ENCODE measurements at regions of chr4 and their contacts with region 1.

Region 1: DNA sequence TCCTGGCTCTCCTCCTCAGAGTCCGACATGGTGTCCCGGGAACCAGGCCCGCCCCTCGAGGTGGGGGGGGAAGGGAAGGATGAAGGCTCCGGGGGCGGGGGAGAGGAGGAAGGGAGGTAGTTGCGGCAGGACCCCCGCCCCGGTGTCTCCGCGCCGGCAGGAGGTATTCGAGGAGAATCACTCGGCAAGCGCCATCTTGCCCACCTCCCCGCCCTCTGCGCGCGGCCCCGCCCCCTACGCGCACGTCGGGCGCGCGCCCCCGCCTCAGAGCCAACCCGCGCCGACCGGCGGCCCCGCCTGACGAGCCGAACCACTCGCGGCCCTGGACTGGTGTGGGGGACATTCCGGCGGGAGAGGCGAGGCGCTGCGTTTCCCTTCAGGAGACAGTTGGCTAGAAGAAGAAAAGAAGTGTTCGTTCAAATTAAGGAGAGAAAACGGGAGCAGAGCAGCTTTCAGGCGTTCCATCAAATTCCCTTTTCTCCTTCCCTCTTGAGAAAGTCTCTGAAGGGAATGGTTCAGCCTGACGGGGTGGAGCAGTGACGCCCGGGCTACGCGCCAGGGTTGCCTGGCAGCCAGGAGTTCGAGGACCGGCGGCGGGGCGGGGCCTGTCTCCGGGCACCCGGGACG is at the start of gene RAB28:
- DNase-seq: peak; percentile 89 to 90 (median 89)
- H3K4me3 ChIP-seq: peak within 1 kb of the TSS; percentile 78 to 86 (median 82)
- H3K4me3 Mint-ChIP-seq: peak within 1 kb of the TSS; percentile 87 to 96
- H3K27ac ChIP-seq: peak within 1 kb of the TSS; percentile 74 to 90
- H3K27ac Mint-ChIP-seq: peak within 1 kb of the TSS; percentile 94 to 100 (median 99)
- H3K4me1 ChIP-seq: peaks cover 18 to 30% of the 10 kb centered on the region in 2 donors
- H3K4me1 Mint-ChIP-seq: peaks cover 25% of the 10 kb centered on the region
- H3K27me3 ChIP-seq: peaks cover 23 to 33% of the 10 kb centered on the region in 2 donors
- H3K27me3 Mint-ChIP-seq: peaks cover 20 to 23% (median 21%) of the 10 kb centered on the region in 3 donors
- CTCF ChIP-seq: no peak
- polyA plus RNA-seq, gene RAB28: 7.6 to 18.0 (median 17.8) TPM

Region 2: DNA sequence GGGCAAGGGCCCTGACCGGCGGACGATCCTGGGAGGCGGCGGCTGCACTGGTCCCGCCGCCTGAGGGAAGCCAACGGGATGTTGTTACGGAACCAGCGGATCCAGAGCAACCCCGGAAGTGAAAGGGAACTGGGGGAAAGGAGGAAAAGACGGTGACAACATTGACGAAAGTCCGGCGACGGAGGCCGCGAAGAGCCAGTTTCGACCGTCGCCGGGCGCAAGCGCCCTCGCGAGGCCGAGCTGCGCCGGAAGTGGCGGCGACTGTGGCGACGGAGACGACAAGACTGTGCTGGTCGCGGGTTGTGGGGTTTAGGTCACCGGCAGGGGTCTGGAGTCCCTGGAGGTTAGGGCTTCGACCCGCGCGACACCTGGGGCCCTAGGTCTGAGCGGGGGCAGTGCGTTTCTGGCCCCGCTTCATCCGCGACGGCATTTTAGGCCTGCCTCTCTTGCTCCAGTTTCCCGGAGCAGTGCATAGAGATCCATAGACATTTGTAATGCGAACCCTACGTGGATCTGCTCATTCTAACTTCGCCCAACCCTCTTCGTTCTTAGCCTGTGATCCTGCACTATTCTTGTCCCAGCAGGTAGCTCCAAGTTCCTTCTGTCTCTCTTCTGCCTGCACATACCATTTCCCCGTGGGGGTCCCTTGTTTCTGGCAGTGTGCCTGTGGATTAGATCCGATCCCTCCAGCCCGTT is 143.5 kb after region 1 on chr4 and contains the start of gene BOD1L1:
- intact Hi-C with region 1: loop called in 1 of 2 experiments (anchors 5 kb)
- DNase-seq: peak; percentile 90 to 91 (median 90)
- H3K4me3 ChIP-seq: peak within 1 kb of the TSS; percentile 83 to 92 (median 89)
- H3K4me3 Mint-ChIP-seq: peak within 1 kb of the TSS; percentile 86 to 95
- H3K27ac ChIP-seq: peak within 1 kb of the TSS; percentile 72 to 91
- H3K27ac Mint-ChIP-seq: peak within 1 kb of the TSS; percentile 85 to 97 (median 94)
- H3K4me1 ChIP-seq: peaks cover 20 to 28% of the 10 kb centered on the region in 2 donors
- H3K4me1 Mint-ChIP-seq: peaks cover 34% of the 10 kb centered on the region
- H3K27me3 ChIP-seq: no peaks in the 10 kb centered on the region
- H3K27me3 Mint-ChIP-seq: peaks cover 0 to 8% (median 7%) of the 10 kb centered on the region in 3 donors
- CTCF ChIP-seq: peak; percentile 29
- polyA plus RNA-seq, gene BOD1L1: 0.72 to 26.7 (median 1.5) TPM

Region 3: DNA sequence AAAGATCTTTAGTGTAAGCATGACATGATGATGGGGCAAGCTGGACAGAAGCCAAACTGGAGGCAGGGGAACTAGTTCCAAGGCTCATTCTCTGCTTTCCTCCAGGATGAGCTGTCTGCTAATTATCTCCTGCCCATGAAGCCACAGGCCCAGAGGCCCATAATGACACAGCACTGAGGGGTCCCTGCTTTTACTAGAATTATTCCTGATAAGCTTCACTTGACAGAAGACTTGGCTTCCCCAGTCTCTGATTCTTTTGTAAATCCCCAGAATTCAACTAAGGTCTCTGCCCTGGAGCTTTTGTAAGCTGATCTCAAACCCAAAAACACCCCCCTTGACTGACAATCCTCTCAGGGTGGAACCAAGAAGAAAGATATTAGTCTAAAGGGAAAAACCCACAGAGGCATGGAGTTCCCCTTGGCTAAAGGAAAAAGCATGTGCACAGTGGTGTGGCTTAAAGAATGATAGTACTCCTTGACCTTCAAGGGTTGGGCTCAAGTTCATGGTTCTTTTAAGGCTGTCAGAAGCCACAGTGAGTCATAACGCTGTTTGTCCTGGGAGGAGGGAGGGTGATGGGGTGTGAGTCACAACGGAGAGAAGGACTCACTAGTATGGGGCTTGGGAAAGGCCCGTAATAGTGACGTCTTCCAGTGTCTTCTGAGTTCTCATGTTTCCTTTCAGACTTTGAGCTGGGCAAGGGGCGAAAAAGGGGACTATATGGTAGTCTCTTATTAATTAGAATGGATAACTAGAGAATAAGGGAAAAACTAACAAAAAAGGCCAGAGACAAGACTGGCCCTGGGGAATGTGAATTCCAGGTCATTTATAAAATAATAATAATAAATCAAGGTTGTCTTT is 1372.1 kb after region 1 on chr4:
- intact Hi-C with region 1: loop called in 1 of 2 experiments (anchors 10 kb)
- DNase-seq: peak; percentile 92 to 98 (median 93)
- H3K4me3 ChIP-seq: no peak overlapping the region
- H3K4me3 Mint-ChIP-seq: no peak overlapping the region
- H3K27ac ChIP-seq: peak overlapping the region; percentile 75 to 90
- H3K27ac Mint-ChIP-seq: peak overlapping the region; percentile 86 to 97 (median 95)
- H3K4me1 ChIP-seq: peaks cover 31 to 33% of the 10 kb centered on the region in 2 donors
- H3K4me1 Mint-ChIP-seq: peaks cover 27% of the 10 kb centered on the region
- H3K27me3 ChIP-seq: peaks cover under 1 to 3% of the 10 kb centered on the region in 2 donors
- H3K27me3 Mint-ChIP-seq: peaks cover 0 to 11% (median 9%) of the 10 kb centered on the region in 3 donors
- CTCF ChIP-seq: no peak